ENCODE measurements at regions of chr22 and their contacts with region 1.

Region 1: DNA sequence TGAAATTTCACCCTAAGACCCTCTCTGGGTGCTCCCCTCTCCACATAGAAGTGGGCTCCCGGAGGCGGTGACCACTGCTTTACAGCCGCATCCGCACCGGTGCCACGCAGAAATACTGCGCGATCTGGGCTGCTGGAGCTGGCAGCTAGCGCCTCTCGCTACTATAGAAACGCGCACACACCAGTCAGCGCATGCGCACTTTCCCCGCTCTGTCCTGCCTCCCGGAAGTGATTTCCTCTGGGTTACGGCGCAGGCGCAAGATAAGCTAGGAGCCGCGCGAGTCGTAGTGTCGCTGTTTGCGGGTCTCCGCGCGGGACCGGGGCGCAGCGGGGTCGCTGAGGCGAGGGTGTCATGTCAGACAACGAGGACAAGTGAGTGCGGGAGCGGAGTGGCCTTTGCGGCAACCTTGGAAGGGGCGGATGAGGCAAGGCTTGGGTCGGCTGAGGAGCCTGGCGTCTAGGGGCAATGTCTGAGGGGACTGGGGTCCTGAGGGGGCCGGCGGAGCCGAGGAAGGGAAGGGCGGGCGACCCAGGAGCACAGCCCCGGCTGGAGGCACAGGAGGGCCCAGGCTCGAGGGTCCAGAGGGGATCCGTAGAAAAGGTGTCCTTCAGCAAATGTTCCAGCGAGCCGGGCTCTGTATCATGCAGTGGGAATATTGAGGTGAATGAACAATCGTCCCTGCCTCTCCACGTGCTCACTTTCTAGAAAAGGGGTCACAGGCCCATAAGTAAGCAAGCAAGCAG is at the starts of genes C22orf23 and POLR2F:
- DNase-seq: peak; percentile 94
- H3K4me3 Mint-ChIP-seq: peak within 1 kb of the TSS; percentile 99
- H3K27ac Mint-ChIP-seq: peak within 1 kb of the TSS; percentile 92
- H3K4me1 Mint-ChIP-seq: peaks cover 26% of the 10 kb centered on the region
- H3K27me3 Mint-ChIP-seq: peaks cover 7% of the 10 kb centered on the region
- total RNA-seq, gene C22orf23: 0.61 TPM in 1 of 2 replicates, not detected in the other
- total RNA-seq, gene POLR2F: 102 and 120 TPM in 2 replicates

Region 2: DNA sequence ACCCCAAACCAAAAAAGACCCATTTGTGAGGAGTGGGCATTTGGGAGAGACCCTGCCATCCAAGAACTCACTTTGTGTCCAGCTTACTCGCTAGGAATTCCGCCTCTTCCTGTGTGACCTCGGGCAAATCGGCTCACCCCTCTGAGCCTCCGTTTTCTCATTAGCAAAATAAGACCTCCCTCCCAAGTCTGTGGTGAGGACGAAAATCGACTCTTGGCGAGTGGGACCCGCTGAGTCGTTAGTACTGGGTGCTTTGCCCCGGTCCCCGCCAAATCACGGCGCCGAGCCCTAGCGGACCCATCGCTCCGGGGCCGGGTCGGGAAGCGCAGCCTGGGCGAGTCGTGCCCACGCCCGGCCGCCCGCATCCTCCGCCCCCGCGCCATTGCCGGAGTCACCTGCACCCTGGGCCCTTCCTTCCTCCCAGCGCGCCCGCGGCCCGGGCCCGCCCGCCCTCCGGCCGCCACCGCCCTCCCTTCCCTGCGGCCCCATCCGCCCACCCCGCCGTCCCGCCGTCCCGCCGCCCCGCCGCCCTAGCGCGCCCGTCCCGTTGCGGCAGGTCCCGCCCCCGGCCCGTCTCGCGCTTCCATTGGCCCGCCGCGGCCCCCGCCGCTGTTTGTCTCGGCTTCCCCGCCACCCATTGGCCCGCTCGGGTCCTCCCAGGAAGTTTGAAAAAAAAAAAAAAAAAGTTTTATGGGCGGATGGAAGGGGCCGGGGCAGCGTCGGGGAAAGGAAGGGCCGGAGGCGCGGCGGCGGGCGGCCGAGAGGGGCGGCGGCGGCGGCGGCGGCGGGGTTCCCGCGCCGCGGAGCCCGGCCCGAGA is 207.9 kb before region 1 on chr22:
- intact Hi-C with region 1: loop called (anchors 5 kb)
- DNase-seq: peak; percentile 85
- H3K4me3 Mint-ChIP-seq: peak overlapping the region; percentile 83
- H3K27ac Mint-ChIP-seq: peak overlapping the region; percentile 74
- H3K4me1 Mint-ChIP-seq: peaks cover 25% of the 10 kb centered on the region
- H3K27me3 Mint-ChIP-seq: no peaks in the 10 kb centered on the region

Region 3: DNA sequence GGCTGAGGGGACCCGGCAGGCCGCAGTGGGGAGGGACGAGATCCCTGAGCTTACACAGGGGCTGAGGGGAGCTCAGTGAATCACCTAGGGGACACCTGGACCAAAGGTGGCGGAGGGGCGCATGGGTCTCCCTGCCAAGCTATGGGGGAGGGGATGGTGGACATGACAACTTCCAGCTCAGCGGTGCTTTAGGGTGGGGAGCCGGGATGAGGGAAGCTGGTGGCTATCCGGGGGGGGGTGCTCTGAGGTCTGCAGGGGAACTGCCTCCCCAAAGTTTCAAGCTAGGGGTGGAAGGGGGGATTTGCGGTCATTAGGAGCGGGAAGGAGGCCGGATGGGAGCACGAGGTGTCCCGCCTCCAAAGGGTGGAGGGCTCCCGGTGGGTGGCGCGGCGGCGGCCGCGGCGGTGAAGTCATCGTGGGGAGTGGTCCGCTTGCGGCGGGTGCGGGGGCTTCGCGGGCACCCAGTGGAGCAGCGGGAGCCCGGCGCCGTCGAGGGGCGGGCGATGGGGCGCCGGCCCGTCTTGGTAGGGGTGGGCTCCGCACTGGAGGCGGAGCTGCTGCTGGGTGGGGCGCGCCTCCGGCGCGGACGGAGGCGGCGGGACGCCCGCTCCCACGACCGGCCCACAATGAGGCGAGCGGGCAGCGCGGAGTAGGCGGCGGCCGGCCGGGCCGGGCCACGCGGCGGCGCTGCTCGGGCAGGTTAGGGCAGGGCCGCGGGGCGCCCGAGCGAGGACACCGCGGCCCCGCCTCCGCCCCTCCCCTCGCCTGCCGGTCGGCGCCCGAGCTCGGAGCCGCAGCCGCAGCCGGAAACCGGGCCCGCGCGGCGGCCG is 47.9 kb before region 1 on chr22 and contains the start of gene MICALL1:
- intact Hi-C with region 1: loop called (anchors 2 kb)
- DNase-seq: peak; percentile 67
- H3K4me3 Mint-ChIP-seq: peak within 1 kb of the TSS; percentile 85
- H3K27ac Mint-ChIP-seq: peak within 1 kb of the TSS; percentile 89
- H3K4me1 Mint-ChIP-seq: peaks cover 26% of the 10 kb centered on the region
- H3K27me3 Mint-ChIP-seq: peaks cover 4% of the 10 kb centered on the region
- total RNA-seq, gene MICALL1: 27.3 and 31.1 TPM in 2 replicates

Measured in activated T-helper 1 cell treated with anti-CD3 and anti-CD28 coated beads, Interleukin-12 subunit alpha, Interleukin-12 subunit beta, Interleukin-2, Interleukin-4 antibody, amounts not matched to agents 30 ng/mL and 10 ng/mL and 1 ng/mL, durations not matched to agents 14 hours and 24 hours and 36 hours (primary cell).